ENCODE measurements at regions of chr10 and their contacts with region 1.

Region 1: DNA sequence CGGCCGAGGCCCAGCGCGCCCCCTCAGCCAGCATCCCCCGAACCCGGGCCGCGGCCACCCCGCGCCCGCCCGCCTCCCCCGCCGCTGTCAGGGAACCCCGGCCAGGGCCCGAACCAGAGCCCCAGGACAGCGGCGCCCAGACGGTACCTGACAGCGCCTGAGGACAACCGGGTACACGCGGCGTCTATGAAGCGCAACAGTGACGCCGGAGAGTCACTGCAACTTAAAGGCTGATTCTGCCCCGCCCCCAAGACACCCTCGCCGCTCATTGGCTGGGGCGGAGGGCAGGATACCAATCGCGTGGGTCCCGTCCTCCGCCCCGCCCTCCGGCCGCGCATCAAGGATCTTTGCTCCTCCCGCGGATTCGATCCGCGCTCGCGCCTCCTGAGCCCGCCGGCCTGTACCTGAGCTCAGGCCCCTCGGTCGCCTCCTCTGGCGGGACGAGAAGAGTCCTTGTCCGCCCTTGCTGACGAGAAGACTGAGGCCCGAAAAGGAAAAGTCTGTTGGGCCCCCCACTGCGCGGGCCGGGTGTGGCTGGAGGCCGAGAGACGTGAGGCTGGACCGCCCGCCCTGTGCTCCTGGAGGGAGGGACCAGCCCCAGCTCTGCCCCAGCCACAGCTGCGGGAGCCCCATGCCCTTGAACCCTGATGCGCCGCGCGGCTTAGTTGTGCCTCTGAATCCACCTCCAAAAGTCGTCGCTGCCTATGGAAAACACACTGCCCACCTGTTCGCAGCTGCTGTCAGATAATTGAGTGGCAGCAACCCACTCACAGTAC is at the start of gene OAT:
- DNase-seq: peak; percentile 95
- H3K4me3 ChIP-seq: peak within 1 kb of the TSS; percentile 64 to 79 (median 75)
- H3K27ac ChIP-seq: peak within 1 kb of the TSS; percentile 70
- H3K4me1 ChIP-seq: peaks cover 29% of the 10 kb centered on the region
- H3K27me3 ChIP-seq: no peaks in the 10 kb centered on the region
- CTCF ChIP-seq: peak; percentile 7 to 30
- total RNA-seq, gene OAT: 204 to 225 TPM

Region 2: GRCh38 chr10:124394583-124394982 is 24.3 kb before region 1 on chr10:
- CTCF ChIA-PET with region 1: no interaction called
- dilution Hi-C with region 1: no loop called
- in situ Hi-C with region 1: no loop called
- intact Hi-C with region 1: loop called (anchors 2 kb)
- DNase-seq: peak; percentile 78
- H3K4me3 ChIP-seq: no peak overlapping the region
- H3K27ac ChIP-seq: peak overlapping the region; percentile 2
- H3K4me1 ChIP-seq: peaks cover 18% of the 10 kb centered on the region
- H3K27me3 ChIP-seq: no peaks in the 10 kb centered on the region
- CTCF ChIP-seq: no peak

Region 3: DNA sequence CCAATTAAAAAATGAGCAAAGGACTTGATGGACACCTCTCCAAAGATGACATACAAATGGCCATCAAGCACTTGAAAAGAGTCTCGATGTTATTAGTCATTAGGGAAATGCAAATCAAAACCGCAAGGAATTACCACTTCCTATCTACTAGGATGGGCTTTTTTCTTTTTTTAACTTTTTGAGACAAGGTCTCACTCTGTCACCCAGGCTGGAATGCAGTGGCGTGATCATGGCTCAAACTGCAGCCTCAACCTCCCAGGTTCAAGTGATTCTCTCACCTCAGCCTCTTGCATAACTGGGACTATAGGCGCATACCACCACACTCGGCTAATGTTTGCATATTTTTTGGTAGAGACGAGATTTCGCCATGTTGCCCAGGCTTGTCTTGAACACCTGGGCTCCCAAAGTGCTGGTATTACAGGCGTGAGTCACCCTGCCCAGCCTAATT is 17.3 kb after region 1 on chr10:
- CTCF ChIA-PET with region 1: no interaction called
- dilution Hi-C with region 1: no loop called
- in situ Hi-C with region 1: no loop called
- intact Hi-C with region 1: loop called (anchors 1 kb)
- DNase-seq: peak; percentile 99
- H3K4me3 ChIP-seq: no peak overlapping the region
- H3K27ac ChIP-seq: peak overlapping the region; percentile 50
- H3K4me1 ChIP-seq: peaks cover 33% of the 10 kb centered on the region
- H3K27me3 ChIP-seq: no peaks in the 10 kb centered on the region
- CTCF ChIP-seq: no peak

Region 4: DNA sequence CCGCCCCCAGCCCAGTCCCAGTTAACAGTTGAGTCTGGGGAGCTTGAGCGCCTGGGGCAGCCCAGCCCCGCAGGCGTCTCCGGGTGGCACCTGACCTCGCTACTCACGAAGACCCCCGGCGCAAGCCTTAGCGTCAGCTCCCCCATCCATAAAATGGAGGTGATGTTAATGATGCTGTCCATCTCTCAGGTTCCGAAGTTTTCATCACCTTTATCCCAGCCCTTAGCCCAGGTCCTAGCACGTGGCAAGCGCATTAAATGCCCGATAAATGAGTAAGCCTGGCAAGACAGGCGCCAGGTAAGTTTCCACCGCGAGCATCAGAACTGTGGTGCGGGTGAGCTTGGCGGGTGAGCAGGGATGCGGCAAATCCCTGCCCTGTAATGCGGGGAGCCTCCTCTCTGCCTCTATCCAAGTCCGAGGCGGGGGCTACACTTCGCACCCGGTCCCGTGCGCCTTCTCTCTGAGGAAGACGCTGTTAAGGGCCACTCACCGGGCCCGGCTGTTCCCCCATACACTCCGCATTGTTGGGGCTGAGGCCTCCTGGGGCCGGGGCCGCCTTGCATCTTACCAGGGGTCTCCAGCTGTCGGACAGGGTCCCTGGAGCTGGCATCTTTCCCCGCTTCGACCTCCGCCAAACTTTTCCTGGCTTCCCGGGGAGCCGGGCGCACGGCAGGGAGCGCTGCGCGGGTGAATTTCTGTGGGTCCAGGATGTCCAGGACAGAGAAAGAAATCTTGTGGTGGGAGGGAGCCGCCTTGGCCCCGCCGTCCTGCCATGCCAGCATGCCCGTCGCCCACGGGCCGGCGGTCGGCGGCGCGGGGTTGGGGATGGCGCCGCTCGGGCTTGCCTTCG is 30.5 kb after region 1 on chr10:
- CTCF ChIA-PET with region 1: no interaction called
- dilution Hi-C with region 1: no loop called
- in situ Hi-C with region 1: no loop called
- intact Hi-C with region 1: loop called (anchors 1 kb)
- DNase-seq: peak; percentile 62
- H3K4me3 ChIP-seq: peak overlapping the region; percentile 30 to 64 (median 55)
- H3K27ac ChIP-seq: no peak overlapping the region
- H3K4me1 ChIP-seq: peaks cover 13% of the 10 kb centered on the region
- H3K27me3 ChIP-seq: no peaks in the 10 kb centered on the region
- CTCF ChIP-seq: no peak

Region 5: GRCh38 chr10:124461438-124462347 is 42.8 kb after region 1 on chr10 and contains the start of gene LHPP:
- CTCF ChIA-PET with region 1: interaction called, 3 read pairs
- dilution Hi-C with region 1: no loop called
- in situ Hi-C with region 1: no loop called
- intact Hi-C with region 1: loop called (anchors 2 kb)
- DNase-seq: peak; percentile 83
- H3K4me3 ChIP-seq: peak within 1 kb of the TSS; percentile 59 to 93 (median 92)
- H3K27ac ChIP-seq: no peak within 1 kb of the TSS
- H3K4me1 ChIP-seq: no peaks in the 10 kb centered on the region
- H3K27me3 ChIP-seq: no peaks in the 10 kb centered on the region
- CTCF ChIP-seq: peak in 1 of 2 donors; percentile 31
- total RNA-seq, gene LHPP: 7.0 to 22.1 TPM

Region 6: GRCh38 chr10:124524969-124525653 is 106.2 kb after region 1 on chr10:
- CTCF ChIA-PET with region 1: no interaction called
- dilution Hi-C with region 1: no loop called
- in situ Hi-C with region 1: no loop called
- intact Hi-C with region 1: loop called (anchors 5 kb)
- DNase-seq: peak; percentile 64
- H3K4me3 ChIP-seq: no peak overlapping the region
- H3K27ac ChIP-seq: no peak overlapping the region
- H3K4me1 ChIP-seq: peaks cover 19% of the 10 kb centered on the region
- H3K27me3 ChIP-seq: no peaks in the 10 kb centered on the region
- CTCF ChIP-seq: no peak

Measured in mammary epithelial cell (primary cell).